GM12878 (cell line): ENCODE measurements at regions of chr19 and their contacts with region 1.

Region 1: GRCh38 chr19:10000171-10000826 is 10.0 kb downstream of the COL5A3 start:
- DNase-seq: no peak
- ATAC-seq: peak; percentile 42; the same call in 2 of the 3 replicates
- H3K4me3 ChIP-seq: no peak overlapping the region
- H3K27ac ChIP-seq: no peak overlapping the region
- H3K4me1 ChIP-seq: peaks cover under 1% of the 10 kb centered on the region; the same call in 1 of the 2 replicates
- H3K27me3 ChIP-seq: no peaks in the 10 kb centered on the region
- CTCF ChIP-seq: peak; percentile 70 to 87 (median 77)
- EP300 ChIP-seq: no peak
- POLR2A ChIP-seq: no peak
- RAD21 ChIP-seq: peak; percentile 73

Region 2: DNA sequence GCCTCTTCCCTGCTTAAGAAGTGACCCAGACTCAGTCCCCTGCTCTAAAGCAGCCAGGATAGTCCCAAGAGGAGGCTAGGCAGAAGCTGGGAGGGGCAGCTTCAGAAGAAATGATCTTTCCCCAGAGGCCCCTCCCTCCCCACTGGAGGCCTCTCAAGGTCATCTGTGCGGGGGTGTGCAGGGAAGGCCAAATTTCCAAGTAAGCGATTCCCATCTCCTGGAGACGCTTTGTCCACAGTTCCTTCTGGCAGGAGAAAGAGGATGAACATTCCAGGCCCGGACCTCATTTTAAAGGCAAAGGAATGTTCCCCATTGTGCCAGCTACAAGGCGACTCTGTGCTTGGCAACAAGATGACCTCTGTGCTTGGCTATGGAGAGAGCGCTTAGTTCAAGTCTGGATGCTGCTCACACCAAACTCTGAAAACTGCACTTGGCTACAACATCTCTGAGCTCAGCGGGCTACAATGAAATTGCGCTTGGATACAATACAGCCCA is 13.5 kb before region 1 on chr19:
- CTCF ChIA-PET with region 1: interaction called, 20 read pairs
- POLR2A ChIA-PET with region 1: interaction called, 3 read pairs
- RAD21 ChIA-PET with region 1: interaction called, 4 read pairs
- SMC1A ChIA-PET with region 1: no interaction called
- in situ Hi-C with region 1: no loop called
- intact Hi-C with region 1: no loop called
- DNase-seq: no peak
- ATAC-seq: no peak
- H3K4me3 ChIP-seq: no peak overlapping the region
- H3K27ac ChIP-seq: no peak overlapping the region
- H3K4me1 ChIP-seq: no peaks in the 10 kb centered on the region
- H3K27me3 ChIP-seq: no peaks in the 10 kb centered on the region
- CTCF ChIP-seq: no peak
- EP300 ChIP-seq: no peak
- POLR2A ChIP-seq: no peak
- RAD21 ChIP-seq: no peak